Cardiac septum (tissue), 1 donor: ENCODE measurements at regions of chr1 and their contacts with region 1.

Region 1: GRCh38 chr1:84122780-84123382 is 21.2 kb upstream of the PRKACB start:
- DNase-seq: no peak

Region 2: DNA sequence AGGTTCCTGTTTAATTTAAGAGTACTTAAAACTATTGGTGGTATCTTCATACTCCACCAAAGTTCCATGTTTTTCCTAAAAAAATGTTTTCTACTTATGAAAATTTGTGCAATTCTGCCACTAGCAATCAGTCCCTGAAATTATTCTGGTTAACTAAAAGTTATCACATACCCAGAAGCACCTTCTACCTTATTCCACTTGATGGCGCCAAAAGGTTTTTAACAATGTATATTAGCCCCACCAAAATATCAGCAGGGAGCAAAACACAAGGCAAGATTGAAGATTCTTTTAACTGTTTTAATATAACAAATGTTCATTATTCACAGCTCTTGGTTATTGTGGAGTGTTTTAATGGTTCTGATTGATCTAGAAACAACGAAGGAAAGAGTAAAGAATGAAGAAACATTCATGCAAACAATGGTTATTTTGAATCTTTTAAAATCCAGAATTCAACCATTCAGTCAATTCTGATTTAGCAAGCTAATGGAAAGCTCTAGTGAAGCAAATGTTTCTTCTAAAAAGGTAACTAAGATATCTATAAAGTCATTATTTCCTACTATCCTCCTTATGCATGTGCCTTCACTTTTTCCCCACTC is 191.1 kb before region 1 on chr1:
- intact Hi-C with region 1: loop called (anchors 2 kb)
- DNase-seq: no peak

Region 3: GRCh38 chr1:84077476-84078107 is 45.3 kb before region 1 on chr1:
- intact Hi-C with region 1: no loop called
- DNase-seq: peak; percentile 85